Caco-2 (cell line): ENCODE measurements at regions of chr3 and their contacts with region 1.

Region 1: GRCh38 chr3:3560591-3561311 is 238.5 kb upstream of the LRRN1 start:
- DNase-seq: no peak
- H3K4me3 ChIP-seq: no peak overlapping the region
- H3K4me3 Mint-ChIP-seq: no peak overlapping the region
- H3K27ac Mint-ChIP-seq: no peak overlapping the region
- H3K4me1 ChIP-seq: no peaks in the 10 kb centered on the region
- H3K4me1 Mint-ChIP-seq: no peaks in the 10 kb centered on the region
- H3K27me3 ChIP-seq: no peaks in the 10 kb centered on the region
- H3K27me3 Mint-ChIP-seq: no peaks in the 10 kb centered on the region
- CTCF ChIP-seq: no peak

Region 2: GRCh38 chr3:2856138-2857133 is 704.3 kb before region 1 on chr3:
- CTCF ChIA-PET with region 1: no interaction called
- POLR2A ChIA-PET with region 1: no interaction called
- intact Hi-C with region 1: no loop called
- DNase-seq: no peak
- H3K4me3 ChIP-seq: no peak overlapping the region
- H3K4me3 Mint-ChIP-seq: no peak overlapping the region
- H3K27ac Mint-ChIP-seq: no peak overlapping the region
- H3K4me1 ChIP-seq: peaks cover 3% of the 10 kb centered on the region; the same call in 1 of the 2 replicates
- H3K4me1 Mint-ChIP-seq: peaks cover 12% of the 10 kb centered on the region
- H3K27me3 ChIP-seq: no peaks in the 10 kb centered on the region
- H3K27me3 Mint-ChIP-seq: no peaks in the 10 kb centered on the region
- CTCF ChIP-seq: no peak

Region 3: DNA sequence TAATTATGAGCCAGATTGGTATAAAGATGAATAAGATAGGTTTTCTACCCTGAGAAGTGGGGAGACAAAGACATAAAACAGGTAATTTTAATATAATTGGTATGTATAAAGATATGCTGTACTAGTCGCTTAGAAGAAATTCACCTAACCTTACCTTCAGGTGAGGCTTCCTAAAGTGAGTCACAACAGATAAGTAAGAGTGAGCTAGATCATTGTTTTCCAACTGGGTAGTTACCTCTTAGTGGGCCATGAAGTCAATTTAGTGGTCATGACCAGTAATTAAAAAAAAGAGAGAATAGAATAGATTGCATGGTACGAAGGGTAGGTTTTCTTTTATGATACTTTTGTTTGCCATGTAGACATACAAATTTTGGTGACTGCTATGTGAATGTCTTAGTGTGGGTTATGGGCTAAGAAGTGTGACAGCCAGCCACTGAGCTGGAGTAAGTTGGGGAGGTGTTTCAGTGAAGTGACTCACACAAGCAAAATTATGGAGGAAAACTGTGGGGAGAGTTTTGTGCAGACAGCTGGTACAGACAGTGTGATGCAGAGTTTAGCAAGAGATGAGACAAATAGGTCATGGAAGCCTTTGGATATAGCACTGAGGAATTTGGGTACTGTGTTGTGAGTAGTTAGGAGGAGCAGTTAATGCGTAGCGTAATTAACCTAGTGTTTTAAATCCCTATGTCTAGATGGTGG is 425.9 kb before region 1 on chr3:
- CTCF ChIA-PET with region 1: no interaction called
- POLR2A ChIA-PET with region 1: no interaction called
- intact Hi-C with region 1: no loop called
- DNase-seq: no peak
- H3K4me3 ChIP-seq: no peak overlapping the region
- H3K4me3 Mint-ChIP-seq: no peak overlapping the region
- H3K27ac Mint-ChIP-seq: peak overlapping the region; percentile 0
- H3K4me1 ChIP-seq: no peaks in the 10 kb centered on the region
- H3K4me1 Mint-ChIP-seq: peaks cover 10% of the 10 kb centered on the region
- H3K27me3 ChIP-seq: no peaks in the 10 kb centered on the region
- H3K27me3 Mint-ChIP-seq: no peaks in the 10 kb centered on the region
- CTCF ChIP-seq: no peak

Region 4: GRCh38 chr3:3506581-3506980 is 54.2 kb before region 1 on chr3:
- CTCF ChIA-PET with region 1: no interaction called
- POLR2A ChIA-PET with region 1: no interaction called
- intact Hi-C with region 1: loop called (anchors 1 kb)
- DNase-seq: no peak
- H3K4me3 ChIP-seq: no peak overlapping the region
- H3K4me3 Mint-ChIP-seq: no peak overlapping the region
- H3K27ac Mint-ChIP-seq: no peak overlapping the region
- H3K4me1 ChIP-seq: peaks cover 5% of the 10 kb centered on the region; the same call in 1 of the 2 replicates
- H3K4me1 Mint-ChIP-seq: no peaks in the 10 kb centered on the region
- H3K27me3 ChIP-seq: no peaks in the 10 kb centered on the region
- H3K27me3 Mint-ChIP-seq: peaks cover 7% of the 10 kb centered on the region
- CTCF ChIP-seq: no peak